Activated CD4-positive, alpha-beta T cell treated with anti-CD3 and anti-CD28 coated beads for 36 hours (primary cell): ENCODE measurements at regions of chr10 and their contacts with region 1.

Region 1: DNA sequence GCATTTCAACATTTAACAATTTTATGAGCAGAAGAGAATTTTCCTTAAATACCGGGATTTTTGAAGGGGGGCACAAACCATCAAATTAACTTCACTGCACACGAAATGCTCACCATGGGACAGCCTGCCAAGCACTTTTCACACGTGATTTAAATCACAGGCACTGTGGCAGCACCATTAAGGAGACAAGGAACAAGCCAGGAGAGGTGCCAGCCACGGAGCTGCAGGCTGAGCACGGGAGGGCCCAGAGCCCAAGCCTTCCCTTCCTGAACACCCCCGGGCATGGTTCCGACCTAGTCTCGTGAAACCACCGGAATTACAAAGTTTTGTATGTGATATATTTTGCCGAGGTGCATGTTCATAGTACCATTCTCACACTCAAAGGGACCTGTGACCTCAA is 13.4 kb downstream of the PITRM1 start:
- DNase-seq: no peak
- ATAC-seq: no peak
- H3K4me3 Mint-ChIP-seq: no peak overlapping the region
- H3K27ac Mint-ChIP-seq: no peak overlapping the region
- H3K4me1 Mint-ChIP-seq: no peaks in the 10 kb centered on the region
- H3K27me3 Mint-ChIP-seq: no peaks in the 10 kb centered on the region

Region 2: GRCh38 chr10:3119796-3120459 is 39.2 kb before region 1 on chr10:
- CTCF ChIA-PET with region 1: interaction called, 5 read pairs
- POLR2A ChIA-PET with region 1: no interaction called
- intact Hi-C with region 1: loop called in 1 of 2 experiments (anchors 5 kb)
- DNase-seq: peak; percentile 31
- ATAC-seq: peak; percentile 45
- H3K4me3 Mint-ChIP-seq: no peak overlapping the region
- H3K27ac Mint-ChIP-seq: no peak overlapping the region
- H3K4me1 Mint-ChIP-seq: no peaks in the 10 kb centered on the region
- H3K27me3 Mint-ChIP-seq: no peaks in the 10 kb centered on the region

Region 3: GRCh38 chr10:3265088-3265487 is 105.9 kb after region 1 on chr10:
- CTCF ChIA-PET with region 1: no interaction called
- POLR2A ChIA-PET with region 1: no interaction called
- intact Hi-C with region 1: no loop called
- DNase-seq: no peak
- ATAC-seq: no peak
- H3K4me3 Mint-ChIP-seq: no peak overlapping the region
- H3K27ac Mint-ChIP-seq: no peak overlapping the region
- H3K4me1 Mint-ChIP-seq: no peaks in the 10 kb centered on the region
- H3K27me3 Mint-ChIP-seq: peaks cover 9% of the 10 kb centered on the region